Caco-2 (cell line): ENCODE measurements at regions of chr16 and their contacts with region 1.

Region 1: GRCh38 chr16:2155091-2156021 is at the start of gene TRAF7:
- DNase-seq: peak; percentile 98 to 99
- H3K4me3 ChIP-seq: peak within 1 kb of the TSS; percentile 92
- H3K4me3 Mint-ChIP-seq: peak within 1 kb of the TSS; percentile 80
- H3K27ac Mint-ChIP-seq: peak within 1 kb of the TSS; percentile 96
- H3K4me1 ChIP-seq: peaks cover 46% of the 10 kb centered on the region
- H3K4me1 Mint-ChIP-seq: peaks cover 25% of the 10 kb centered on the region
- H3K27me3 ChIP-seq: no peaks in the 10 kb centered on the region
- H3K27me3 Mint-ChIP-seq: peaks cover 3% of the 10 kb centered on the region
- CTCF ChIP-seq: no peak
- total RNA-seq, gene TRAF7: 61.4 and 66.3 TPM in 2 replicates

Region 2: DNA sequence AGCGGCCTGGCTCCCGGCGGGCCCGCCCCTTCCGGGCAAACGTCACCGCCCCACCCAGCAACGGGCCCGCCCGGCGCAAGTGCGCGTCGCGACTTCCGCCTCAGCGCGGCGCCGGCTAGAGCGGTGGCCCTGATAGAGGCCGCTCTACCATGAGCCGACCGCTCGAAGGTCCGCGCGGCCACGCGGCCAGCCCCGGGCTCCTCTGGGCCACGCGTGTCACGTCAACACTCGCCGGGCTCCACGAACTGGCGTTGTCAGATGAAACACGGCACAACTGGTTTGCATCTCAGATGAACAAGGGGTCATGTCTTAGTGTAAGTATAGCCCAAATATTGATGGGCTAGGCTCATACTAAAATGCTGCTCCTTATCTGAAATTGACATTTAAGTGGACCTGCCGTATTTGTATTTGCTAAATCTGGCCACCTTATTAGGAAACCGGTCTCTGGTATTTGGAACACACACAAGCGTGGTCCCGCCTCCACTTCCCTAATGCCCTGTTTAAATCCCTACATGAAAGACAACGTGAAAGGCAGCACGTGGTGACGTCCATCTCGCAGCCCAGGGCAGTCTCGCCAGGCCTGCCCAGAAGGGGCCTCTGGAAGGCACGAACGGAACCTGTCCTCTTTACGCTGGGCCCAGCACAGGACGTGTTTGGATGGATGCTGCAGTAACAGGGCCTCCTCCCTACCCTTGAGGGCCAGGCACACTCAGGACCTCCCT is 145.4 kb before region 1 on chr16 and contains the start of gene ZNF598:
- CTCF ChIA-PET with region 1: no interaction called
- POLR2A ChIA-PET with region 1: interaction called, 16 read pairs
- intact Hi-C with region 1: no loop called
- DNase-seq: peak; percentile 68 to 88
- H3K4me3 ChIP-seq: peak within 1 kb of the TSS; percentile 77
- H3K4me3 Mint-ChIP-seq: peak within 1 kb of the TSS; percentile 82
- H3K27ac Mint-ChIP-seq: peak within 1 kb of the TSS; percentile 85
- H3K4me1 ChIP-seq: peaks cover 16% of the 10 kb centered on the region
- H3K4me1 Mint-ChIP-seq: peaks cover 5% of the 10 kb centered on the region
- H3K27me3 ChIP-seq: no peaks in the 10 kb centered on the region
- H3K27me3 Mint-ChIP-seq: no peaks in the 10 kb centered on the region
- CTCF ChIP-seq: no peak
- total RNA-seq, gene ZNF598: 43.7 and 50.4 TPM in 2 replicates

Region 3: DNA sequence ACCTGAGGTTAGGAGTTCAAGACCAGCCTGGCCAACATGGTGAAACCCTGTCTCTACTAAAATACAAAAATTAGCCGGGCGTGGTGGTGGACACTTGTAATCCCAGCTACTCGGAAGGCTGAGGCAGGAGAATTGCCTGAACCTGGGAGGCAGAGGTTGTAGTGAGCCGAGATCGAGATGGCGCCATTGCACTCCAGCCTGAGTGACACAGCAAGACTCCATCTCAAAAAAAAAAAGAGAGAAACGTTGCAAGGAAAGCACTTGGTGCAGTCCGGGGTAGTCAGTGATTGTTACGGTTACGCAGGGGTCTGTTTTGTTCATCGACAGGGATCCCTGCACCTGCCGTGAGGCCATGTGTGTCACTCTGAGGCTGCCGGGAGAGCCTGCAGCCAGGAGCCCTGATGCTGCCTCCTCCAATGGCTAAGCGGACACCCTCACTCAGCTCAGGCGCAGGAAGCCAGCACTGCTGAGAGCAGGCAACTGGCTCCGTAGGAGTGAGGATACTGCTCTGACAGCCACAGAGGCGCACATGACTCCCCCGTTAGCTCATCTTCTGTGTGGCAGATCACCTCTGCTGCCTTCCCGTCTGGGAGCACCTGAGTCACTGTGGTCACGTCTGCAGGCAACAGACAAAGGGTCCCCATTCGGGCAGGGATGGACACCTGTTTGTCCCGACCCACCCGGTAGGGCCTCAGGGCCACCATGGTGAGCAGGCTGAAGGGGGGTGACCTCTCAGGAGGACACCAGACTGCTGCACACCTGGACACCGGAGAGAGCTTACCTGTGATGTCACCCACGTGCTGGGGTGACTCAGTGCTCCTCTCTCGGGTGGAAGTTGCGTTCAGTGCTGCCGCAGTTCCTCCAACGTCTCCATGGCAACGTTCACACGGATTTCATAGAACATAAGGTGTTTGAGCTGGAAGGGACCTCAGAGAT is 12.1 kb before region 1 on chr16:
- CTCF ChIA-PET with region 1: interaction called, 10 read pairs
- POLR2A ChIA-PET with region 1: interaction called, 15 read pairs
- intact Hi-C with region 1: no loop called
- DNase-seq: peak in 1 of 2 experiments; percentile 34
- H3K4me3 ChIP-seq: no peak overlapping the region
- H3K4me3 Mint-ChIP-seq: no peak overlapping the region
- H3K27ac Mint-ChIP-seq: no peak overlapping the region
- H3K4me1 ChIP-seq: peaks cover 5% of the 10 kb centered on the region; the same call in 1 of the 2 replicates
- H3K4me1 Mint-ChIP-seq: peaks cover 6% of the 10 kb centered on the region
- H3K27me3 ChIP-seq: no peaks in the 10 kb centered on the region
- H3K27me3 Mint-ChIP-seq: no peaks in the 10 kb centered on the region
- CTCF ChIP-seq: no peak

Region 4: GRCh38 chr16:2213817-2214720 is 58.7 kb after region 1 on chr16:
- CTCF ChIA-PET with region 1: no interaction called
- POLR2A ChIA-PET with region 1: interaction called, 20 read pairs
- intact Hi-C with region 1: no loop called
- DNase-seq: no peak
- H3K4me3 ChIP-seq: peak overlapping the region; percentile 75
- H3K4me3 Mint-ChIP-seq: peak overlapping the region; percentile 74
- H3K27ac Mint-ChIP-seq: peak overlapping the region; percentile 66
- H3K4me1 ChIP-seq: peaks cover 29% of the 10 kb centered on the region
- H3K4me1 Mint-ChIP-seq: no peaks in the 10 kb centered on the region
- H3K27me3 ChIP-seq: no peaks in the 10 kb centered on the region
- H3K27me3 Mint-ChIP-seq: no peaks in the 10 kb centered on the region
- CTCF ChIP-seq: no peak